ENCODE measurements at regions of chr4 and their contacts with region 1.

Region 1: GRCh38 chr4:2220016-2220630 is 21.8 kb downstream of the HAUS3 start:
- DNase-seq: peak; percentile 54 to 78 (median 59)
- ATAC-seq: peak; percentile 70 to 92 (median 88)
- H3K4me3 ChIP-seq: no peak overlapping the region
- H3K27ac ChIP-seq: no peak overlapping the region
- H3K4me1 ChIP-seq: peaks cover 0 to 8% (median 0%) of the 10 kb centered on the region in 12 donors
- H3K27me3 ChIP-seq: no peaks in the 10 kb centered on the region
- CTCF ChIP-seq: peak; percentile 72 to 87 (median 84)
- POLR2A ChIP-seq: no peak

Region 2: DNA sequence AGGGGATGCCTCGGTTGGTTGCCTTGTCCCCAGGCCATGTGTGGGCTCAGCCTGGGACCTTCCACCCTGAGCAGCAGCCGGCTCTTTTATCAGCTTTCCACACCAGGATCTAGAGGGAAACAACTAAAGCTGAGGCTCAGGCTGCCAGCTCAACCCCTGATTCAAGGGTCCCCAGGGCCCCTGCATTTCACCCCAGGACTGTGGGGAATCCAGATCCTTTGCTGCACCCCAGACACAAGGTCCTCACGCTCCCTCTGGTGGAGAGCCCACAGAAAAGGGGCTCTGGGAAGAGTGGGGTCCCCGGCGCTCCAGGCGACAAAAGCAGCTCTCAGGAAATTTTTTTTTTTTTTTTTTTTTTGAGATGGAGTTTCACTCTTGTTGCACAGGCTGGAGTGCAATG is 134.0 kb after region 1 on chr4:
- intact Hi-C with region 1: loop called in 1 of 10 experiments (anchors 5 kb)
- DNase-seq: no peak
- ATAC-seq: no peak
- H3K4me3 ChIP-seq: no peak overlapping the region
- H3K27ac ChIP-seq: no peak overlapping the region
- H3K4me1 ChIP-seq: peaks cover 0 to 18% (median 12%) of the 10 kb centered on the region in 12 donors
- H3K27me3 ChIP-seq: no peaks in the 10 kb centered on the region
- CTCF ChIP-seq: peak in 6 of 12 donors; percentile 8 to 38 (median 16)
- POLR2A ChIP-seq: no peak

Region 3: GRCh38 chr4:2441393-2442174 is 221.5 kb after region 1 on chr4:
- intact Hi-C with region 1: loop called in 6 of 10 experiments (anchors 1 to 10 kb)
- DNase-seq: peak in 2 of 5 donors; percentile 56 to 62
- ATAC-seq: peak; percentile 46 to 77 (median 74)
- H3K4me3 ChIP-seq: no peak overlapping the region
- H3K27ac ChIP-seq: no peak overlapping the region
- H3K4me1 ChIP-seq: peaks cover 0 to 5% (median 0%) of the 10 kb centered on the region in 12 donors
- H3K27me3 ChIP-seq: no peaks in the 10 kb centered on the region
- CTCF ChIP-seq: peak; percentile 57 to 76 (median 63)
- POLR2A ChIP-seq: no peak

Region 4: GRCh38 chr4:2468445-2469192 is 248.5 kb after region 1 on chr4 and contains the start of gene RNF4:
- intact Hi-C with region 1: loop called in 7 of 10 experiments (anchors 2 to 10 kb)
- DNase-seq: peak; percentile 97
- ATAC-seq: peak; percentile 95 to 97 (median 96)
- H3K4me3 ChIP-seq: peak within 1 kb of the TSS; percentile 71 to 100 (median 91)
- H3K27ac ChIP-seq: peak within 1 kb of the TSS; percentile 86 to 98 (median 94)
- H3K4me1 ChIP-seq: peaks cover 6 to 37% (median 24%) of the 10 kb centered on the region in 12 donors
- H3K27me3 ChIP-seq: no peaks in the 10 kb centered on the region
- CTCF ChIP-seq: peak in 1 of 12 donors; percentile 6
- POLR2A ChIP-seq: peak in 1 of 2 donors; percentile 66
- total RNA-seq, gene RNF4: 24.3 to 45.7 (median 30.8) TPM

Region 5: DNA sequence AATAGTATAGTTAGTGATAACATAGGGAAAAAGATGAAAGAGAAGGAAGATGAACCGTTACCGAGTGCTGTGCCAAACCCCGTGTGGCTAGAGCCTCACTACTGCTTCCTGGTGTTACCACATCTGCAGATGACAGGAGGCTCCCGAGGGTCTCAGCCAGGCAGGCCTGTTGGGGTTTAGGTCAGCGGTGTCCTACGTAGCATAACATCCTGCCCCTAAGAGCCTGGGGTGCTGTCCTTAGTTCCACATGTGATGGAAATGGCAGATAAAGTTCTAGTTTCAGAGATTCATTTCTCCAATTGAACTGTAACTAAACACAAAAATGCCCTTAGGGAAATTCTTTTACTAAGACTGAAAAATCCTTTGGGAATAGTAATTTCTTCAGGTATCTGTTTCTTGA is 432.7 kb after region 1 on chr4:
- intact Hi-C with region 1: loop called in 1 of 10 experiments (anchors 10 kb)
- DNase-seq: no peak
- ATAC-seq: no peak
- H3K4me3 ChIP-seq: no peak overlapping the region
- H3K27ac ChIP-seq: no peak overlapping the region
- H3K4me1 ChIP-seq: no peaks in the 10 kb centered on the region
- H3K27me3 ChIP-seq: no peaks in the 10 kb centered on the region
- CTCF ChIP-seq: no peak
- POLR2A ChIP-seq: no peak

Measured in heart left ventricle (tissue), 16 donors.